ENCODE measurements at regions of chr14 and their contacts with region 1.

Region 1: DNA sequence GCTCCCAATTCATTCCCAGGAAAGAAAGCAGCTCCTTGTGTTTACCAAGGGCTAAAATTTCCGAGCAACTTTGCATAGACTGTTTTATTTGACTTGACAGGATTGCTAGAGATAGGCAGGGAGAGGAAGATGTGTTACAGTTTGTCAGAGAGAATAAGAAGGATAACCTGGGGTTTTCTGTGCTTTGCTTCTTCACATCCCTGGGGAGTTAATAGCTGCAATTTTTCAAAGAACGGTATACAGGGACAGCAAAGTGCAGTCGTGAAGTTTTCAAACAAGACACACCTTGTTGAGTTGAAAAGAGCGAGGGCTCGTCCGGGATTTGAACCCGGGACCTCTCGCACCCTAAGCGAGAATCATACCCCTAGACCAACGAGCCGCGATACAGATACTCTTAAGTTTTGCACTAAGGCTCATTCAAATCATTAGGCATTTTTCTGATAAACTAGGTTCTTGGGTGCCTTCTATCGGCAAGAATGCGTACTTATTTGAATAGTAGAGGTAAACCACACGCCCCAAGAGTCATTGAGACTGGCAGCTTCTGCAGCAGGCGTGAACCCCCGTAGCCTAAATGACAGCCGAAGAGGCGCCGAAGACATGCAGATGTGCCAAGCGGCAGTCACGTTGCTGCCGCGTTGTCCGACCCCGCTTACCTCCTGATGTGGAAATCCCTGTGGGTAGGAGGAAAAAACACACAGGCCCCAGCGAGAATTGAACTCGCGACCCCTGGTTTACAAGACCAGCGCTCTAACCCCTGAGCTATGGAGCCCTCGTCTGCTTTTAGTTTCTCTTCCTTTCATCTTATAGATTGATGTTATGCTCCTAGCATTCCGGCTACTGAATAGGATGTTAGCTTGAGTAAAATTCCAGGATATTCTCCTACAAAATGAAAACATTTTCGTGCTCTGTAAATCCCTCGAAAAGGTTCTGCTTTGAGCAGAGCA is 22.2 kb upstream of the RNASE12 start:
- DNase-seq: peak; percentile 86
- H3K4me3 ChIP-seq: peak overlapping the region; percentile 39 to 57 (median 40)
- H3K27ac ChIP-seq: peak overlapping the region; percentile 73 to 91 (median 78)
- H3K4me1 ChIP-seq: peaks cover 0 to 29% (median 12%) of the 10 kb centered on the region in 4 donors
- H3K27me3 ChIP-seq: no peaks in the 10 kb centered on the region
- CTCF ChIP-seq: peak; percentile 69 to 99 (median 72)
- EP300 ChIP-seq: no peak
- POLR2A ChIP-seq: peak; percentile 22

Region 2: GRCh38 chr14:20327005-20327869 is 286.1 kb before region 1 on chr14:
- in situ Hi-C with region 1: loop called in 3 of 4 experiments (anchors 5 to 10 kb)
- intact Hi-C with region 1: loop called (anchors 10 kb)
- DNase-seq: no peak
- H3K4me3 ChIP-seq: no peak overlapping the region
- H3K27ac ChIP-seq: peak overlapping the region in 3 of 4 donors; percentile 24 to 60 (median 58)
- H3K4me1 ChIP-seq: peaks cover 3 to 26% (median 4%) of the 10 kb centered on the region in 4 donors
- H3K27me3 ChIP-seq: no peaks in the 10 kb centered on the region
- CTCF ChIP-seq: peak; percentile 71 to 80 (median 77)
- EP300 ChIP-seq: no peak
- POLR2A ChIP-seq: no peak

Region 3: GRCh38 chr14:20332788-20333493 is 280.4 kb before region 1 on chr14 and contains the start of gene CCNB1IP1:
- in situ Hi-C with region 1: loop called (anchors 5 to 10 kb)
- intact Hi-C with region 1: loop called (anchors 10 kb)
- DNase-seq: peak; percentile 64
- H3K4me3 ChIP-seq: peak within 1 kb of the TSS; percentile 48 to 69 (median 60)
- H3K27ac ChIP-seq: peak within 1 kb of the TSS; percentile 89 to 95 (median 93)
- H3K4me1 ChIP-seq: peaks cover 5 to 24% (median 7%) of the 10 kb centered on the region in 4 donors
- H3K27me3 ChIP-seq: no peaks in the 10 kb centered on the region
- CTCF ChIP-seq: no peak
- EP300 ChIP-seq: no peak
- POLR2A ChIP-seq: peak; percentile 77
- total RNA-seq, gene CCNB1IP1: 11.9 to 38.3 (median 23.9) TPM

Region 4: GRCh38 chr14:20343092-20343861 is 270.1 kb before region 1 on chr14 and contains the start of gene PARP2:
- in situ Hi-C with region 1: loop called in 1 of 4 experiments (anchors 5 kb)
- intact Hi-C with region 1: loop called (anchors 10 kb)
- DNase-seq: peak; percentile 96
- H3K4me3 ChIP-seq: peak within 1 kb of the TSS; percentile 57 to 65 (median 60)
- H3K27ac ChIP-seq: peak within 1 kb of the TSS; percentile 94 to 98 (median 96)
- H3K4me1 ChIP-seq: peaks cover 0 to 7% (median 2%) of the 10 kb centered on the region in 4 donors
- H3K27me3 ChIP-seq: no peaks in the 10 kb centered on the region
- CTCF ChIP-seq: peak in 1 of 5 experiments; percentile 17
- EP300 ChIP-seq: no peak
- POLR2A ChIP-seq: peak; percentile 93
- total RNA-seq, gene PARP2: 4.4 to 96.5 (median 9.1) TPM

Region 5: GRCh38 chr14:20413045-20413799 is 200.1 kb before region 1 on chr14 and contains the start of gene TEP1:
- in situ Hi-C with region 1: loop called in 1 of 4 experiments (anchors 25 kb)
- intact Hi-C with region 1: no loop called
- DNase-seq: peak; percentile 94
- H3K4me3 ChIP-seq: peak within 1 kb of the TSS; percentile 65 to 93 (median 78)
- H3K27ac ChIP-seq: peak within 1 kb of the TSS; percentile 96 to 99 (median 98)
- H3K4me1 ChIP-seq: peaks cover 4 to 53% (median 39%) of the 10 kb centered on the region in 4 donors
- H3K27me3 ChIP-seq: no peaks in the 10 kb centered on the region
- CTCF ChIP-seq: peak in 1 of 5 experiments; percentile 30
- EP300 ChIP-seq: no peak
- POLR2A ChIP-seq: peak; percentile 97
- total RNA-seq, gene TEP1: 72.2 to 216 (median 79.9) TPM

Region 6: GRCh38 chr14:20461274-20462001 is 151.9 kb before region 1 on chr14 and contains the start of gene PIP4P1:
- in situ Hi-C with region 1: no loop called
- intact Hi-C with region 1: loop called (anchors 10 kb)
- DNase-seq: peak; percentile 98
- H3K4me3 ChIP-seq: peak within 1 kb of the TSS; percentile 69 to 86 (median 82)
- H3K27ac ChIP-seq: peak within 1 kb of the TSS; percentile 95 to 99 (median 97)
- H3K4me1 ChIP-seq: peaks cover 10 to 29% (median 20%) of the 10 kb centered on the region in 4 donors
- H3K27me3 ChIP-seq: no peaks in the 10 kb centered on the region
- CTCF ChIP-seq: no peak
- EP300 ChIP-seq: peak; percentile 59
- POLR2A ChIP-seq: peak; percentile 74
- total RNA-seq, gene PIP4P1: 18.7 to 49.4 (median 31.1) TPM

Region 7: GRCh38 chr14:20690848-20691523 is 77.6 kb after region 1 on chr14:
- in situ Hi-C with region 1: loop called in 3 of 4 experiments (anchors 5 to 10 kb)
- intact Hi-C with region 1: no loop called
- DNase-seq: peak; percentile 48
- H3K4me3 ChIP-seq: no peak overlapping the region
- H3K27ac ChIP-seq: peak overlapping the region in 1 of 4 donors; percentile 34
- H3K4me1 ChIP-seq: peaks cover 6 to 47% (median 28%) of the 10 kb centered on the region in 4 donors
- H3K27me3 ChIP-seq: no peaks in the 10 kb centered on the region
- CTCF ChIP-seq: peak; percentile 77 to 91 (median 88)
- EP300 ChIP-seq: no peak
- POLR2A ChIP-seq: no peak

Measured in transverse colon (tissue), 4 donors.